ENCODE measurements at regions of chr2 and their contacts with region 1.

Region 1: GRCh38 chr2:39124000-39124745 is 3.3 kb upstream of the SOS1 start:
- DNase-seq: peak; percentile 91 to 93
- ATAC-seq: peak; percentile 53 to 63
- H3K4me3 ChIP-seq: peak overlapping the region; percentile 79 to 87 (median 84)
- H3K27ac ChIP-seq: peak overlapping the region; percentile 90 to 96 (median 95)
- H3K4me1 ChIP-seq: peaks cover 31 to 38% of the 10 kb centered on the region in 2 donors
- H3K27me3 ChIP-seq: no peaks in the 10 kb centered on the region
- CTCF ChIP-seq: peak in 3 of 5 experiments; percentile 47 to 68 (median 61)
- POLR2A ChIP-seq: peak; percentile 68 to 82

Region 2: DNA sequence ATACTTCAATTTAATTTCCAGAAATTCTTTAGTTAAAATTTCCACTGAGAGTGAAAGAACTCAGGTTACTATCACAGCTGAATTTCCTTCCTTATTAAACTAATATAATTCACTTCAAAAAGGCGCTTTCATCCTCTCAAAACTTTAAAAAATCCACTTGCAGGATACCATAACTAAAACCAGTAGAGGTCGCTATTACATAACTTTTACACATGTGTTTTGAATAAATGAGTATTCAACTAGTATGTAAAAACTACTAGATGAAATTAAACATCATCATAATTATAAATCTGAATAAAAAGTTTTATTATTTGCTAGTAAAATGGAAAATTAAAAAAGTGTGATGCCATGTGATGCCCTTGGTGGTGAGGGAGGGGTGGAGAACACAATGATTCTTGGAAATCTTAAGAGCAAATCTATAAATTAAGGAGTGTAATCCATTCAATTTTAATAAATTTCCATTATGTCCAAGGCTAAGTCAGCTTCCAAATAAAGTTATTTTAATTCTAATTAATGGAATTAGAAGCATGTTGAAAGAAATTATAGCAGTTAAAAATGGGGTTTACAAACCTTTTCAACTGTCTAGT is 64.7 kb before region 1 on chr2:
- in situ Hi-C with region 1: loop called in 2 of 4 experiments (anchors 10 kb)
- intact Hi-C with region 1: loop called (anchors 1 kb)
- DNase-seq: no peak
- ATAC-seq: no peak
- H3K4me3 ChIP-seq: no peak overlapping the region
- H3K27ac ChIP-seq: peak overlapping the region in 1 of 4 donors; percentile 34
- H3K4me1 ChIP-seq: peaks cover 0 to 7% of the 10 kb centered on the region in 2 donors
- H3K27me3 ChIP-seq: no peaks in the 10 kb centered on the region
- CTCF ChIP-seq: peak; percentile 52 to 80 (median 75)
- POLR2A ChIP-seq: no peak

Region 3: GRCh38 chr2:39069136-39069515 is 55.0 kb before region 1 on chr2:
- in situ Hi-C with region 1: loop called in 2 of 4 experiments (anchors 10 kb)
- intact Hi-C with region 1: no loop called
- DNase-seq: no peak
- ATAC-seq: no peak
- H3K4me3 ChIP-seq: no peak overlapping the region
- H3K27ac ChIP-seq: no peak overlapping the region
- H3K4me1 ChIP-seq: peaks cover 37 to 38% of the 10 kb centered on the region in 2 donors
- H3K27me3 ChIP-seq: no peaks in the 10 kb centered on the region
- CTCF ChIP-seq: no peak
- POLR2A ChIP-seq: no peak

Region 4: DNA sequence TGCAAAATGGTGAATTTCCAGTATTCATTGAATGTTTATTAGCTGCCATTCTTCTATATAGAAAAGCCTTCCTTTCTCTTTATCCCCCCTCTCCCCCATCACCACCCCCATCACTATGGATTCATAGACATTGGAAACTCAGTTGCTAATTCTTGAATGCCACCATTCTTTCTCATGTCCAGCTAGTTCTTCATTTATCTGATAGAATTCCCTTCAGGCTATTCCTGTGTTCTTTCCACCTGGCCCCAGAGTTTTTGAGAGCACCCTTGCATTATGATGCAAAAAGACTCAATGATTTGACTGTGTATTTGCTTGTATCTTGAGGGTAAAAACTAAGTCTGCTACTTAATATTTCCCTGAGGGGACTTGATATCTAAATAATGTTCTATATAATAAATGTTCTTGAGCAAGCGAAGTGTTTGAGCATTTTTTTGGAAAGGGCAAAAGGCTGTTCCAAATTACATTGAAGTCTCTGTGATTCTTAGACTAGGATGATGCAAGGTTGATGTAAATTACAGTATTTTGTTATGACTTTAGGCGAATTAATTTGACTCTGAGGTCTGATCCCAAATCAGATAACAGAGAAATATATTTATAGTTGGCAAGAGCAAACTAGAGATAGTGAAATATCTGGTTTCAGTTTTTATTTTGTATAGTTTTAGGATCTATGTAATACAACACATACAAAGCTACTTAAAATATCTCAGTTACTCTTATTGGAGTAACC is 15.5 kb after region 1 on chr2:
- in situ Hi-C with region 1: no loop called
- intact Hi-C with region 1: loop called (anchors 2 kb)
- DNase-seq: no peak
- ATAC-seq: no peak
- H3K4me3 ChIP-seq: no peak overlapping the region
- H3K27ac ChIP-seq: peak overlapping the region; percentile 71 to 84 (median 76)
- H3K4me1 ChIP-seq: peaks cover 17 to 31% of the 10 kb centered on the region in 2 donors
- H3K27me3 ChIP-seq: no peaks in the 10 kb centered on the region
- CTCF ChIP-seq: no peak
- POLR2A ChIP-seq: no peak

Region 5: GRCh38 chr2:39175026-39175812 is 51.0 kb after region 1 on chr2:
- in situ Hi-C with region 1: no loop called
- intact Hi-C with region 1: loop called (anchors 2 kb)
- DNase-seq: no peak
- ATAC-seq: peak in 1 of 2 donors; percentile 75
- H3K4me3 ChIP-seq: no peak overlapping the region
- H3K27ac ChIP-seq: peak overlapping the region in 1 of 4 donors; percentile 52
- H3K4me1 ChIP-seq: peaks cover 0 to 4% of the 10 kb centered on the region in 2 donors
- H3K27me3 ChIP-seq: no peaks in the 10 kb centered on the region
- CTCF ChIP-seq: no peak
- POLR2A ChIP-seq: no peak

Region 6: DNA sequence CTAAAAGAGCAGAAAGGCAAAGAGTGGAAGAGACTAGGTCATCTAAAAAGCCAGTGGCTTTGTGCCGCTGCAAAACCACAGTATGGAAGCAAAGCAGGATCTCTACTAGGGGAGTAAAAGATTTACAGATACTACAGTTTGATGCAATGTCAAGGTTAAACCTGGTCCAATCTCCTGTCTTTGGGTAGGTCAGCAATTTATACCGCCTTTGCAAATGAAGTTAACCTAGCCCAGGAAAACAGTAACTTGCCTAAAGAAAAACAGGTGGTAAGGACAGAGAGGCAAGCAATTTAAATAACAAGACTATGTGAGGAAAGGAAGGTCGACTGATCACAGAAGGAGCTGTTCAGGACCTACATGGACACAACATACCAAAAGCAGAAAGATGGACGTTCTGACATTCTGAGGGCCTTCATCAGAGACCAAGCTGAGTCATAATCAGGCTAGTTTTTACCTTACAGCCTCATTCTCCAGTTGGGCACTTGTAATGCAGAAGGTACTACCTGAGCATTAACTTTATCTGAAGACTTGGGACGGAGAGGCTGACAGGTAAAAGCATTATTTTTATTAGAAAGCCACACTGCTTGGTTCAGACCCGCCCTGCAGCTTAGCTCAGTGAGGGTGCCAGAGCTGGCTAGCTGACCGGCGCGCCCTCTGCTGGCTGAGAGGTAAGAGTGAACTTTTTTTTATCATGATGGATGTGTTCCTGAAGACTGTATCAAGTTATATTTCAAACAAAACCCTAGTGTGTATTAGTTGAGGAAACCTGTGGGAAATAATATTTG is 103.6 kb after region 1 on chr2:
- in situ Hi-C with region 1: loop called in 1 of 4 experiments (anchors 5 kb)
- intact Hi-C with region 1: loop called (anchors 1 kb)
- DNase-seq: peak; percentile 60 to 72
- ATAC-seq: peak; percentile 56 to 76
- H3K4me3 ChIP-seq: peak overlapping the region in 1 of 4 donors; percentile 35
- H3K27ac ChIP-seq: peak overlapping the region in 1 of 4 donors; percentile 69
- H3K4me1 ChIP-seq: peaks cover 13 to 17% of the 10 kb centered on the region in 2 donors
- H3K27me3 ChIP-seq: no peaks in the 10 kb centered on the region
- CTCF ChIP-seq: peak; percentile 73 to 89 (median 83)
- POLR2A ChIP-seq: no peak

Region 7: GRCh38 chr2:39642051-39642742 is 518.0 kb after region 1 on chr2:
- in situ Hi-C with region 1: no loop called
- intact Hi-C with region 1: no loop called
- DNase-seq: no peak
- ATAC-seq: no peak
- H3K4me3 ChIP-seq: no peak overlapping the region
- H3K27ac ChIP-seq: no peak overlapping the region
- H3K4me1 ChIP-seq: peaks cover 15 to 18% of the 10 kb centered on the region in 2 donors
- H3K27me3 ChIP-seq: no peaks in the 10 kb centered on the region
- CTCF ChIP-seq: no peak
- POLR2A ChIP-seq: no peak